ENCODE measurements at regions of chr5 and their contacts with region 1.

Region 1: GRCh38 chr5:69217548-69218526 is 16.8 kb upstream of the CDK7 start:
- DNase-seq: peak; percentile 96
- H3K4me3 Mint-ChIP-seq: peak overlapping the region; percentile 97
- H3K27ac Mint-ChIP-seq: peak overlapping the region; percentile 93
- H3K4me1 Mint-ChIP-seq: peaks cover 15% of the 10 kb centered on the region
- H3K27me3 Mint-ChIP-seq: no peaks in the 10 kb centered on the region

Region 2: DNA sequence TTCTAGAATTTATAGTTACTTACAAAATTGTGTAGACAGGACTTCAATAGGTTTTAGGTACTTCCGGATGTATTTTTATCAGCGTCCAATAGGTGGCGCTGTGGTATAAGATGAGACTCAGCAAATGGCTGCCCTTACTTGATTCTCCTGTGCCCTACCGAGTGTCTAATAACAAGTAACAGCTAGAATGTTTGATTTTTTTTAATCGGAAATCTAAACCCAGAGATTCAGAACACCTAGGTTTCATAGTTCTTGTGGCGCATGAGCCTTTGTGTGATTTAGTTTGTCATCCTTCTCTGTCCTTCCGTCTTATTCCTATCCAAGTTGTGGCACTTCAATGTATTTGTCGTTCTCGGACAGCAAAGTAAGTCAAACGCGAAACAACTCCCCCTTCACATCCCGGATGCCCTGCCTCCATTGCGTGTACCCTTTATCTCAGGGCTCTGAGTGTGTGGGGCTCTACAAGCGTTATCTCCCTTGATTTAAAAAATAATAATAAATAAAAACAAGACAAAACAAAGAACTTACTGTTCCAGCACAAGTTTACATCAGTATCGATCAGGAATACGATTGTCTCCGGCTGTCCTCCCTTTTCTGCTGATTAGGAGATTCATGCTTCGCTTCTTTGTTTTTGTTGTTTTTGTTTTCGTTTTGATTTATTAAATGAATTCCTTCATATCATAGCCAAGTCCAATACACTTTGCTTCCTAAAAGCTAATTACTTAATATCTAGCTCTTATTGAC is 174.8 kb before region 1 on chr5:
- CTCF ChIA-PET with region 1: no interaction called
- POLR2A ChIA-PET with region 1: no interaction called
- intact Hi-C with region 1: loop called (anchors 2 kb)
- DNase-seq: peak; percentile 82
- H3K4me3 Mint-ChIP-seq: peak overlapping the region; percentile 70
- H3K27ac Mint-ChIP-seq: peak overlapping the region; percentile 76
- H3K4me1 Mint-ChIP-seq: peaks cover 8% of the 10 kb centered on the region
- H3K27me3 Mint-ChIP-seq: no peaks in the 10 kb centered on the region

Region 3: DNA sequence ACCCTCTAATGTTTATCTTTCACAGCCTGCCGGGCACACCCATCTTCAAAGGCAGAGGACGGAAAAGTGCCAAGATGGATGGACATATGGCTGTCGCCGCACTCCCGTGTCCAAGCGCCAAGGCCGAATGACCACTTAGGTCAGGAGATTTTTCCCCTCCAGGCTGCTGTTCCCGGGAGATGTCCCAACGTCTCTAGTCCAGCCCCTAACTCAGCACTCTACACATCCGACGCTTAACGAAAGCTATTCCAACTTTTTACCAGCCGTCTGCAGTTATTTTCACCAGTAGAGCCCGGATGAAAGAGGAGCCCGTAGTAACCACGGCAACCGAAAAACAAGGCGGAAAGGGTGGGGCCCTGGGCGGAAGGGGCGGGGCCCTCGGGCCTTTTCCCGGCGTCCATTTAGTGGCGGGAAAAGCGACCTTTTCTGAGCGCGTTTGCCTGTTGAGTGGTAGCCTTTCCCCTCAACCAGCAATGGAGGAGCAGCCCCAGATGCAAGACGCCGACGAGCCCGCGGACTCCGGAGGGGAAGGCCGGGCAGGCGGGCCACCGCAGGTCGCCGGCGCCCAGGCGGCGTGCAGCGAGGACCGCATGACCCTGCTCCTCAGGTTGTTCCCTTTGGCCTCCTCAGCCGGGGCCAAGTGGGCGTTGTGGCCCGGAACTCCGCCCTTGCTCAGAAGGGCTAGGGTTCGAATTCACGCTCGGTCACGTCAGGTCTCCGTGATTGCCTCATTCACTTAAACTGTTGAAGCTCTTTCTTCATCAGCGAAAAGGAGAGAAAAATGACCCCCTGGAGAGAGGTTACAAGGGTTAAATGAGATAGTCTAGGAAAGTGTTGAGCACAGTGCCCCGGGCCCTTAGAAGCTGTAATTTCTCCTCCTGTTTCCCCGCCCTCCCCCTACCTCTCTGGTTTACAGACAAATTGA is 28.4 kb before region 1 on chr5 and contains the start of gene CENPH:
- CTCF ChIA-PET with region 1: no interaction called
- POLR2A ChIA-PET with region 1: interaction called, 8 read pairs
- intact Hi-C with region 1: loop called (anchors 1 kb)
- DNase-seq: peak; percentile 96
- H3K4me3 Mint-ChIP-seq: peak within 1 kb of the TSS; percentile 90
- H3K27ac Mint-ChIP-seq: peak within 1 kb of the TSS; percentile 89
- H3K4me1 Mint-ChIP-seq: peaks cover 6% of the 10 kb centered on the region
- H3K27me3 Mint-ChIP-seq: no peaks in the 10 kb centered on the region
- total RNA-seq, gene CENPH: 80.7 to 82.0 TPM

Region 4: GRCh38 chr5:69234457-69235268 is 16.8 kb after region 1 on chr5 and contains the start of gene CDK7:
- CTCF ChIA-PET with region 1: no interaction called
- POLR2A ChIA-PET with region 1: no interaction called
- intact Hi-C with region 1: loop called (anchors 1 kb)
- DNase-seq: peak; percentile 96
- H3K4me3 Mint-ChIP-seq: peak within 1 kb of the TSS; percentile 98
- H3K27ac Mint-ChIP-seq: peak within 1 kb of the TSS; percentile 81
- H3K4me1 Mint-ChIP-seq: peaks cover 36% of the 10 kb centered on the region
- H3K27me3 Mint-ChIP-seq: no peaks in the 10 kb centered on the region
- total RNA-seq, gene CDK7: 36.2 to 41.2 TPM

Region 5: DNA sequence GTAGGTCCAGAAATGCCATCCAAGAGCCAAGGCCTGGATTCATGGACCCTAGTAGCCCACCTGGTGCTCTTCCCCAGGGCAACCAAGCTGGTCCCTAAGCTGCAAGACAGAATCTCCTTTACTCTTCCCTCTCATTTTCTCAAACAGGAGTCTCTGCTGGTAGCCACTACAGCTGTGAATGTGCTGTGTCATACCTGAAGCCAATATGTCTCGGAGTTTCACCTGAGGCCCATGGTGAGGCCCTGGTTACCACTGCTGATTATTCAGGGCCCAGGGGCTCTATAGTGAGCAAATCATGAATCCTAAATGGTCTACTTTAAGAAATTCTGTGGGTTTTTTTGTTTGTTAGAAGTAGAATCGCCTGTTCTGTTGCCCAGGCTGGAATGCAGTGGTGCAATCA is 32.8 kb after region 1 on chr5:
- CTCF ChIA-PET with region 1: no interaction called
- POLR2A ChIA-PET with region 1: no interaction called
- intact Hi-C with region 1: no loop called
- DNase-seq: no peak
- H3K4me3 Mint-ChIP-seq: no peak overlapping the region
- H3K27ac Mint-ChIP-seq: no peak overlapping the region
- H3K4me1 Mint-ChIP-seq: peaks cover 16% of the 10 kb centered on the region
- H3K27me3 Mint-ChIP-seq: no peaks in the 10 kb centered on the region

Measured in activated CD4-positive, alpha-beta memory T cell treated with anti-CD3 and anti-CD28 coated beads for 36 hours (primary cell).